ENCODE measurements at regions of chr15 and their contacts with region 1.

Region 1: DNA sequence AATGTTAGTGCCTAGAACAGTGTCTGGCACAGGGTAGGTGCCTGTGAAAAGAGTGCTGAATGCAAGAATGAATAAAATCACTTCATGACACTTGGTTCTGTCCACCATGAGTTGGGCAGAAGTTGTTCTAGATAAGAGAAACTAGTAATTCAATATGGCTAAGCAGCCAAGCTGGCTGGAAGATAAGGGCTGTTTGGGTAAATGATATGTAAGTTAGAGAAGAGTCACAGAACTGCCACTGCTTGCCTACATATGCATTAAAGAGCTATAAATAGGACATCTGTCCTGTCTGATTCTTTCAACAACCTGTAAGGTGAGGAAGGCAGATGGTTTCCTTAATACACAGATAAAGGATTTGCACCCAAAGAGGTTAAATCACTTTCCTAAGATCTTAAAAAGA is 13.1 kb downstream of the MTMR10 start:
- DNase-seq: peak in 2 of 3 donors; percentile 57 to 79
- H3K4me3 ChIP-seq: no peak overlapping the region
- H3K27ac ChIP-seq: no peak overlapping the region
- H3K4me1 ChIP-seq: peaks cover 11 to 12% (median 12%) of the 10 kb centered on the region in 4 experiments
- H3K27me3 ChIP-seq: no peaks in the 10 kb centered on the region

Region 2: DNA sequence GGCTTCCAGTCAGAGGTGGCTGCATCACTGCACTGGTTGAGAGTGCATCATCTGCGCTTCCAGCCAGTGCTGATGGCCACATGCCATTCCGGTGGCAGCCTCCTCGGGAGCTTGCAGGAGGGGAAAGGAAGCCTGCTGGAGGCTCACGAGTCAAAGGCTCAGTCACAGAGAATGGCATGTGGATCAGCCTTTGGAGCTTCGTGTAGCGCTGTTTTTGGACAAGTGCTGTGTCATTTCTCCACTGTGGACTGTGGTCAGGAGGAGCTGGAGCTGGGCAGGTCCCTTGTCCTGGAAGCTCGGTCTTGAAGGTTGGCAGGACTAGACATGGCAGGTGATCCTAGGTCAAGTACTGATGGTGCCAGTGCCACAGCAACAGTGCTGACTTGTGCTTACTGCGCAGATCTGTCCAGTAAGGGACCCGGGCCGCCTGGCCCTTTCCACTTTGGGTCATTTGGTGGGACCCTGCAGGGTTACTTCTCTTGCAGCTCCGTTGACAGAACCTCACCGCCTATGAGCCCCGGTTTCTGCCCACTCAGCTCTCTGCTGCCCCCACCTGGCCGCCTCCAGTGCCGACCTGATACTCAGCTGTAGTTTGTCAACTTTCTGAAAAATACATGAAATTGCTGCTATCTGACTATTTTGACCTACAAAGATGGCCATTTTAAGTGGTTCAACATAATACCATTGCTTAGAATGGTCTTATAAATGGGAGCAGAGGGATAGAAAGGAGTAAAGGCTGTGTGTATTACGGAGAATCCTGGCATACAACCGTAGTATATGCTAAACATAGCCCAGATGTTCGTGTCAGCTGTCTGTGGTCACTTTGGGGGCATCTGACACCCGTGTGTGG is 150.8 kb after region 1 on chr15:
- CTCF ChIA-PET with region 1: interaction called, 12 read pairs
- POLR2A ChIA-PET with region 1: no interaction called
- DNase-seq: peak; percentile 58 to 80 (median 75)
- H3K4me3 ChIP-seq: no peak overlapping the region
- H3K27ac ChIP-seq: no peak overlapping the region
- H3K4me1 ChIP-seq: peaks cover 0 to 4% (median 0%) of the 10 kb centered on the region in 4 experiments
- H3K27me3 ChIP-seq: peaks cover 0 to 10% (median 0%) of the 10 kb centered on the region in 5 experiments